ENCODE measurements at regions of chr16 and their contacts with region 1.

Region 1: DNA sequence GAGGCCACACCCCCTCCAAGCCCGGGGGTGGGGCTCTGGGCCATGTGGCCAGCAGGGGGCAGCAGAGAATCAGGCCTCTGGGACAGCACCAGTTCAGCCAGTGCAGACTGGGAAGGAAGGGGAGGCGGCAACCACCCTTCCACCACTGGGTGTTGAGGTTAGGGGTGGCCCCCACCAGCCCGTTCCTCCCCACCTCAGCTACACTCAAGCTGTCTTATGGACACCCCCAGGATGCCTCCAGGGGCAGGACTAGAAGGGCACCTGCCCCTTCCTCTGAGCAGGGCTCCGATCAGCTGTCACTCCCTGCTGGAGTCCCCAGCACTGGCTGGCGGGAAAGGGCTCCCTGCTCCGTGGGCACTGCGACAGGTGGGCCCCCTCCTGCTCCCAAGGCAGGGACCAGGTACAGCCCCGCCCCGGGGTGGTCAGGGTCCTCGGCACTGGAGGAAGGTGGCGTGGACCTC is 21.8 kb downstream of the KATNB1 start:
- DNase-seq: peak; percentile 85 to 91 (median 88)
- ATAC-seq: peak; percentile 91
- H3K4me3 ChIP-seq: no peak overlapping the region
- H3K27ac ChIP-seq: peak overlapping the region in 3 of 4 donors; percentile 44 to 55 (median 48)
- H3K4me1 ChIP-seq: peaks cover 8% of the 10 kb centered on the region
- H3K27me3 ChIP-seq: no peaks in the 10 kb centered on the region
- CTCF ChIP-seq: peak; percentile 93 to 99 (median 95)
- POLR2A ChIP-seq: no peak

Region 2: GRCh38 chr16:57859331-57859730 is 102.0 kb after region 1 on chr16:
- intact Hi-C with region 1: loop called (anchors 5 kb)
- DNase-seq: no peak
- ATAC-seq: no peak
- H3K4me3 ChIP-seq: no peak overlapping the region
- H3K27ac ChIP-seq: no peak overlapping the region
- H3K4me1 ChIP-seq: peaks cover 13% of the 10 kb centered on the region
- H3K27me3 ChIP-seq: no peaks in the 10 kb centered on the region
- CTCF ChIP-seq: peak in 2 of 7 experiments; percentile 10 to 14
- POLR2A ChIP-seq: no peak

Region 3: GRCh38 chr16:57994778-57995177 is 237.4 kb after region 1 on chr16:
- intact Hi-C with region 1: loop called (anchors 10 kb)
- DNase-seq: peak in 3 of 4 donors; percentile 37 to 64 (median 57)
- ATAC-seq: no peak
- H3K4me3 ChIP-seq: no peak overlapping the region
- H3K27ac ChIP-seq: no peak overlapping the region
- H3K4me1 ChIP-seq: peaks cover 48% of the 10 kb centered on the region
- H3K27me3 ChIP-seq: no peaks in the 10 kb centered on the region
- CTCF ChIP-seq: peak in 5 of 7 experiments; percentile 20 to 37 (median 26)
- POLR2A ChIP-seq: no peak

Measured in body of pancreas (tissue), 4 donors.